ENCODE measurements at regions of chr12 and their contacts with region 1.

Region 1: GRCh38 chr12:124767066-124767821 is 96.4 kb downstream of the SCARB1 start:
- DNase-seq: peak in 1 of 2 experiments; percentile 71
- H3K4me3 ChIP-seq: no peak overlapping the region
- H3K27ac ChIP-seq: no peak overlapping the region
- H3K4me1 ChIP-seq: peaks cover 25% of the 10 kb centered on the region
- H3K27me3 ChIP-seq: no peaks in the 10 kb centered on the region
- CTCF ChIP-seq: peak; percentile 99

Region 2: GRCh38 chr12:123801573-123802178 is 965.6 kb before region 1 on chr12:
- CTCF ChIA-PET with region 1: no interaction called
- POLR2A ChIA-PET with region 1: no interaction called
- intact Hi-C with region 1: loop called (anchors 10 kb)
- DNase-seq: peak in 1 of 2 experiments; percentile 46
- H3K4me3 ChIP-seq: no peak overlapping the region
- H3K27ac ChIP-seq: no peak overlapping the region
- H3K4me1 ChIP-seq: no peaks in the 10 kb centered on the region
- H3K27me3 ChIP-seq: peaks cover 20% of the 10 kb centered on the region; the same call in 1 of the 2 replicates
- CTCF ChIP-seq: peak; percentile 72

Region 3: GRCh38 chr12:124501112-124501561 is 266.1 kb before region 1 on chr12:
- CTCF ChIA-PET with region 1: no interaction called
- POLR2A ChIA-PET with region 1: no interaction called
- intact Hi-C with region 1: loop called (anchors 5 kb)
- DNase-seq: no peak
- H3K4me3 ChIP-seq: no peak overlapping the region
- H3K27ac ChIP-seq: no peak overlapping the region
- H3K4me1 ChIP-seq: no peaks in the 10 kb centered on the region
- H3K27me3 ChIP-seq: no peaks in the 10 kb centered on the region
- CTCF ChIP-seq: no peak

Region 4: GRCh38 chr12:124680863-124681778 is 86.1 kb before region 1 on chr12:
- CTCF ChIA-PET with region 1: no interaction called
- POLR2A ChIA-PET with region 1: no interaction called
- intact Hi-C with region 1: loop called (anchors 5 kb)
- DNase-seq: peak; percentile 72 to 96
- H3K4me3 ChIP-seq: no peak overlapping the region; the same call in 1 of the 2 replicates
- H3K27ac ChIP-seq: peak overlapping the region; percentile 95
- H3K4me1 ChIP-seq: peaks cover 88% of the 10 kb centered on the region
- H3K27me3 ChIP-seq: no peaks in the 10 kb centered on the region
- CTCF ChIP-seq: peak; percentile 38

Region 5: DNA sequence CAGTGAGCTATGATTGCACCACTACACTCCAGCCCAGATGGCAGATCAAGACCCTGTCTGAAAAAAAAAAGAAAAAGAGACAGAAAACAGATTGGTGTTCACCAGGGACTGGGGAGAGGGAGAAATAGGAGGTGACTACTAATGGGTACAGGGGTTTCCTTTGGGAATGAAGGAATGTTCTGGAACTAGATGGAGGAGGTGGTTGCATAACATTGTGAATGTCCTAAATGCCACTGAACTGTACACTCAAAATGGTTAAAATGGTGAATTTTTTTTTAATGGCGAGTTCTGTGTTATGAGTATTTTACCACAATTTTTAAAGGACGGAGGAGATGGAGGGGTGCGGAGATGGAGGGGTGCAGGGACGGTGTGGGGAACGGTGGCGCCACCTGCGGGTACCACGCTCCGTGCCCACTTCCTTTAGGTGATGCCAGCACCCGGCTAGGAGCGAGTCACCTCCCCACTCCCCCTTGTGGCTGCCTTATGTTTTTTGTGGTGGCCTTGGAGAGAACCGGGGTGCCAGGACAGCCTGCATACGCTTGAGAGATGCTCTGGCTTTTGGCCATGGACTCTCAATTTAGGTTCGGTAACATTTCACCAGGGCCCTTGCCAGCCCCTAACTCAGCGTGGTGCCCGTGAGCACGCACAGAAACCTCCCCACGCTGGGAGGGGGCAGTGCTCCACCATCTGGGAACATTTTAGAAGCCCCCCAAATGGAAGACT is 131.1 kb after region 1 on chr12:
- CTCF ChIA-PET with region 1: interaction called, 11 read pairs
- POLR2A ChIA-PET with region 1: no interaction called
- intact Hi-C with region 1: loop called (anchors 2 kb)
- DNase-seq: peak; percentile 62 to 69
- H3K4me3 ChIP-seq: no peak overlapping the region
- H3K27ac ChIP-seq: no peak overlapping the region
- H3K4me1 ChIP-seq: no peaks in the 10 kb centered on the region
- H3K27me3 ChIP-seq: no peaks in the 10 kb centered on the region
- CTCF ChIP-seq: peak; percentile 79

Region 6: GRCh38 chr12:124927201-124928094 is 160.2 kb after region 1 on chr12:
- CTCF ChIA-PET with region 1: no interaction called
- POLR2A ChIA-PET with region 1: no interaction called
- intact Hi-C with region 1: no loop called
- DNase-seq: peak; percentile 81 to 93
- H3K4me3 ChIP-seq: peak overlapping the region; percentile 76
- H3K27ac ChIP-seq: peak overlapping the region; percentile 98
- H3K4me1 ChIP-seq: peaks cover 36% of the 10 kb centered on the region
- H3K27me3 ChIP-seq: no peaks in the 10 kb centered on the region
- CTCF ChIP-seq: no peak

Measured in PC-9 (cell line).